ENCODE measurements at regions of chr11 and their contacts with region 1.

Region 1: GRCh38 chr11:1628506-1629325 is 859 bp upstream of the KRTAP5-5 start:
- DNase-seq: peak; percentile 44 to 83
- ATAC-seq: peak; percentile 84 to 97
- H3K4me3 ChIP-seq: no peak overlapping the region
- H3K27ac ChIP-seq: no peak overlapping the region
- H3K4me1 ChIP-seq: no peaks in the 10 kb centered on the region
- CTCF ChIP-seq: peak; percentile 82
- EP300 ChIP-seq: no peak
- POLR2A ChIP-seq: no peak
- RAD21 ChIP-seq: peak; percentile 52 to 68

Region 2: GRCh38 chr11:1546536-1547400 is 81.9 kb before region 1 on chr11:
- CTCF ChIA-PET with region 1: interaction called, 36 read pairs
- POLR2A ChIA-PET with region 1: no interaction called
- DNase-seq: peak; percentile 58 to 84
- ATAC-seq: peak; percentile 60 to 83
- H3K4me3 ChIP-seq: peak overlapping the region; percentile 63
- H3K27ac ChIP-seq: peak overlapping the region; percentile 74 to 86
- H3K4me1 ChIP-seq: peaks cover 21% of the 10 kb centered on the region
- CTCF ChIP-seq: peak; percentile 93
- EP300 ChIP-seq: no peak
- POLR2A ChIP-seq: no peak
- RAD21 ChIP-seq: peak; percentile 77 to 98

Region 3: DNA sequence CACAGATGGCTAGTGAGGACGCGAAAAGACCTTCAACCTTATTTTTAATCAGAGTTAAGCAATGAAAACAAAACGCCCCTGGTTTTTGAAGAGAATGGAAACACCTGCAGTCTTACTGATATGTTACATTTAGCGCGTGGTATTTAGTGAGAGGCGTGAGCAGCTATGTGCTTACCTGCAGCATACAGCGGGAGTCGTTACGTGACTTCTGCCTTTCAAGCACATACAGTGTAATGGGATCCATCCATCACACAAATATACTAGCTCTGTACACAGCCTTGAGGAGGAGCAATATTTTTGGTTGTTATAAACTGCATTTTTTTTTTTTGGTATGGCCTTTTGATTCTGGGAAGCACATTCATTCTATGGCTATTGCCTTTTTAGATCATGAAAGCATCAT is 36.1 kb before region 1 on chr11:
- CTCF ChIA-PET with region 1: interaction called, 47 read pairs
- POLR2A ChIA-PET with region 1: no interaction called
- DNase-seq: no peak
- ATAC-seq: no peak
- H3K4me3 ChIP-seq: no peak overlapping the region
- H3K27ac ChIP-seq: no peak overlapping the region
- H3K4me1 ChIP-seq: peaks cover 15% of the 10 kb centered on the region
- CTCF ChIP-seq: no peak
- EP300 ChIP-seq: no peak
- POLR2A ChIP-seq: no peak
- RAD21 ChIP-seq: no peak

Region 4: DNA sequence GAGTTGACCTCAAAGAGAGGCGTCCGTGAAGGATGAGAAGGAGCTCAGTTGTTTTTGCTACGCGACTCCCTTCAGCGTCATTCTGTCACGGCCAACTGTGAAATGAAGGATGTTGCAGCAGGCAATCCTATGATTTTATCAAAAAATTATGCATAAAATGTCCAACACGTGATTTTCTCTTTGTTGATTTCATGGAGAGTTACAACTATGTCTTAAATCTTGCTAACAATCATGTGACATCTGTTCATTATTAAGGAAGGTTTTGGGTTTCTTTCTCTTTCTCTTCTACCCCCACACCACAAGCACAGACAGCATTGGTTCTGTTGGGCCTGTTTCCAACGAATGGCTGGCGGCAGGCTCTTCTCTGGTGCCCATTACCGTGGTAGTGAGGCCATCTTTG is 10.5 kb before region 1 on chr11:
- CTCF ChIA-PET with region 1: interaction called, 18 read pairs
- POLR2A ChIA-PET with region 1: no interaction called
- DNase-seq: no peak
- ATAC-seq: no peak
- H3K4me3 ChIP-seq: no peak overlapping the region
- H3K27ac ChIP-seq: no peak overlapping the region
- H3K4me1 ChIP-seq: no peaks in the 10 kb centered on the region
- CTCF ChIP-seq: no peak
- EP300 ChIP-seq: no peak
- POLR2A ChIP-seq: no peak
- RAD21 ChIP-seq: no peak

Region 5: GRCh38 chr11:1640076-1640946 is 11.6 kb after region 1 on chr11:
- CTCF ChIA-PET with region 1: interaction called, 54 read pairs
- POLR2A ChIA-PET with region 1: no interaction called
- DNase-seq: peak; percentile 50 to 74
- ATAC-seq: peak; percentile 71 to 95
- H3K4me3 ChIP-seq: no peak overlapping the region
- H3K27ac ChIP-seq: no peak overlapping the region
- H3K4me1 ChIP-seq: no peaks in the 10 kb centered on the region
- CTCF ChIP-seq: peak; percentile 73
- EP300 ChIP-seq: no peak
- POLR2A ChIP-seq: no peak
- RAD21 ChIP-seq: peak; percentile 18; a peak in 1 of 5 replicates

Measured in A549 (cell line).